ENCODE measurements at regions of chr2 and their contacts with region 1.

Region 1: GRCh38 chr2:231568785-231569435 is 23.8 kb upstream of the TEX44 start:
- DNase-seq: no peak

Region 2: GRCh38 chr2:230627806-230628724 is 940.8 kb before region 1 on chr2:
- intact Hi-C with region 1: no loop called
- DNase-seq: no peak

Region 3: DNA sequence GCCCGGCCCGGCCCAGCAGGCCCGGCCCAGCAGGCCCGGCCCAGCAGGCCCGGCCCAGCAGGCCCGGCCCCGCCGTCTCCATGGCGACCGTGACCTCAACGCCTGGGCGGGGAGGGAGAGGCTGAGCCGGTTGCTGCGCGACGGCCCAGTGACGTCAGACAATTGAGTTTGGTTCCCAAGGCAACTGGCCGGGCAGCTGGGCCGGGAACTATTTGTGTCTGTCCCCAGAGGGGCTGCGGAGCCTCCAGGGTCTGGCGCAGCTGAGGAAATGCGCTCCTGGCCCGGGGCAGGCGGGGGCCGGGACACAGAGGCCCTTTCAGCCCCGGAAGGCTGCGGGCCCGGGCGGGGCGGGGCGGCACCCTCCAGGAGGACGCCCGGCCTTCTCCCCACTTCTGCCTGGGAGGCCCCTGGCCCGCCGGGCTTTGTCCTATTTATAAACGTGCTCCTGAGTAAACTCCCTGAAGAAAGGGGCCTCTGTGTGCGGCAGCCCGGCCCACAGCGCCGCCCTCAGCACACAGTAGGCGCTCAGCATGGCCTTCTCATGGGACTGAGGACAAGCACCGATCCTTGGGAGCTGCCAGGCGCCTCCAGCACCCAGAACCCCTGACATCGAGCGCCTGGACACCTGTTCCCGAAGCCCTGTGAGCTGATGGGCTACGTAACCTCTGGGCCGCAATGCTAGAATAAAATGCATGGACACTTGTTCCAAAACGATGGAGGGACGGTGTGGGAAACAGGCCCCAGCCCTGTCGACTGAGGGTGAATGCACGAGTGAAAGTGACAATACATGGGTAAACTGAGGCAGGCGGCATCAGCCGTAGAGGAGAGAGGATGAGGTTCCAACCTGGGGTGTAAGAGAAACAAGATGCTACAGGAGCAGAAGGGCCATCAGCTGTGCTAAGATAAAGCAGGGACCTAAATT is 36.0 kb after region 1 on chr2:
- intact Hi-C with region 1: loop called in 1 of 2 experiments (anchors 5 kb)
- DNase-seq: peak; percentile 100